CD8-positive, alpha-beta T cell (primary cell): ENCODE measurements at regions of chr7 and their contacts with region 1.

Region 1: GRCh38 chr7:100556541-100556940 is 17.2 kb downstream of the SAP25 start:
- DNase-seq: no peak
- ATAC-seq: no peak
- H3K4me3 ChIP-seq: no peak overlapping the region
- H3K4me3 Mint-ChIP-seq: no peak overlapping the region
- H3K27ac ChIP-seq: no peak overlapping the region
- H3K27ac Mint-ChIP-seq: no peak overlapping the region
- H3K4me1 ChIP-seq: peaks cover 5% of the 10 kb centered on the region
- H3K4me1 Mint-ChIP-seq: peaks cover 13% of the 10 kb centered on the region
- H3K27me3 ChIP-seq: no peaks in the 10 kb centered on the region
- H3K27me3 Mint-ChIP-seq: no peaks in the 10 kb centered on the region
- CTCF ChIP-seq: no peak

Region 2: DNA sequence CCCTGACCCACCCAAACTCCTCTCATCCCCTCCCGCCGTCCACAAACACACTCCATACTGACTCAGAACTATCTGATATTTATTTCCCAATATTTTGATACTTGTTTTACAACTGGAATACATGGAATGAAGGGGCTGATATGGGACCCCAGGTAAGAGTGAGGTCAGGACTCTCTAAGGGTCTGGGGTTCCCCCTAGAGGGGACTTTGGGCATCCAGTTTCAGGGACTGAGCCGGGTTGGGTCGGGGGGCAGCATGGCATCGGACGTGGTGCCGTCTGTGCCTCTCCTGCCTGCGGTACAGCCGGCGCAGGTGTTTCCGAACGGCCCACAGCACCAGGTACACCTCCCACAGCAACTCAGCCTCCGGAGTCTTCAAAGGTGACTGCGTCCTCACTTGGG is 100.0 kb before region 1 on chr7:
- CTCF ChIA-PET with region 1: interaction called, 211 read pairs
- POLR2A ChIA-PET with region 1: no interaction called
- intact Hi-C with region 1: no loop called
- DNase-seq: no peak
- ATAC-seq: no peak
- H3K4me3 ChIP-seq: no peak overlapping the region
- H3K4me3 Mint-ChIP-seq: no peak overlapping the region
- H3K27ac ChIP-seq: no peak overlapping the region
- H3K27ac Mint-ChIP-seq: no peak overlapping the region
- H3K4me1 ChIP-seq: peaks cover 8% of the 10 kb centered on the region
- H3K4me1 Mint-ChIP-seq: peaks cover 9% of the 10 kb centered on the region
- H3K27me3 ChIP-seq: no peaks in the 10 kb centered on the region
- H3K27me3 Mint-ChIP-seq: no peaks in the 10 kb centered on the region
- CTCF ChIP-seq: no peak

Region 3: GRCh38 chr7:100489824-100490223 is 66.7 kb before region 1 on chr7:
- CTCF ChIA-PET with region 1: interaction called, 23 read pairs
- POLR2A ChIA-PET with region 1: interaction called, 3 read pairs
- intact Hi-C with region 1: no loop called
- DNase-seq: peak in 4 of 9 experiments; percentile 24 to 66 (median 49)
- ATAC-seq: no peak
- H3K4me3 ChIP-seq: no peak overlapping the region
- H3K4me3 Mint-ChIP-seq: no peak overlapping the region
- H3K27ac ChIP-seq: no peak overlapping the region
- H3K27ac Mint-ChIP-seq: no peak overlapping the region
- H3K4me1 ChIP-seq: peaks cover 12% of the 10 kb centered on the region
- H3K4me1 Mint-ChIP-seq: peaks cover 15% of the 10 kb centered on the region
- H3K27me3 ChIP-seq: no peaks in the 10 kb centered on the region
- H3K27me3 Mint-ChIP-seq: no peaks in the 10 kb centered on the region
- CTCF ChIP-seq: no peak

Region 4: DNA sequence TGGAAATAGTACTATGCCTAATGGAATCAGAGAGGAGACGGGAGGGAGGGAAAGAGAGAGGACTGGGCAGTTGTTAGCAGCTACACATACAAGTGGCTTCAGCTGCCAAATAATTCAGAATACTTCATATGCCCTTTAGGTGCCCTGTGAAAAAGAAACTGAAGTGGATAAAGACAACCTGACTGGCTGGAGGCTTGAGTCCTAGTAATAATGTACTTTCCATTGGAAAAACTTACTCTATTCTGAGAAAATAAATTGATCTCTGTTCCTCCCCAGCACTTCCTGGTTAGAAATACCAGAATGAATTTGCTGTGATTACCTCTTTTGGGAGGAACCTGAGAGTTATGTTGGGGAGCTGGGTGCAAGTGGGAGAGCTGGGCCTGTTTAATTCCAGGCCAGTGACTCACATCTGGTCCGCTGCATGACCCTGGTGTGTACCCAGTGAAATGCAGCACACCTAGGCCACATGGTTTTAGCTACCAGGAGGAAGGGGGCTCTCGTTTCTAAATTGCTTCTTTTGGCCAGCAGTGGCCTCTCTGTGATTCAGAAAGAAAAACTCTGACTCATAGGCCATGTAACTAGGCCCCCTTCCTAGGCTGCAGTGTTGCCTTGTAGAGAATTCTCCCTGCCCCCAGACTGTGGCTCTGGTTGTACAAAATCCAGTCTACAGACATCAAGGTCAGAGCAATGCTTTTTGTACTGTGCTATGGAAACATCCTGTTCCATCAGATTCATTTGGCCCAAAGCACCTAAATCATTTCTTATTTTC is 11.0 kb before region 1 on chr7:
- CTCF ChIA-PET with region 1: interaction called, 86 read pairs
- POLR2A ChIA-PET with region 1: interaction called, 13 read pairs
- intact Hi-C with region 1: no loop called
- DNase-seq: peak in 6 of 9 experiments; percentile 53 to 65 (median 57)
- ATAC-seq: peak; percentile 75
- H3K4me3 ChIP-seq: peak overlapping the region; percentile 0 to 21
- H3K4me3 Mint-ChIP-seq: peak overlapping the region; percentile 72
- H3K27ac ChIP-seq: peak overlapping the region; percentile 17 to 84
- H3K27ac Mint-ChIP-seq: peak overlapping the region; percentile 91
- H3K4me1 ChIP-seq: peaks cover 91% of the 10 kb centered on the region
- H3K4me1 Mint-ChIP-seq: peaks cover 91% of the 10 kb centered on the region
- H3K27me3 ChIP-seq: no peaks in the 10 kb centered on the region
- H3K27me3 Mint-ChIP-seq: no peaks in the 10 kb centered on the region
- CTCF ChIP-seq: no peak

Region 5: DNA sequence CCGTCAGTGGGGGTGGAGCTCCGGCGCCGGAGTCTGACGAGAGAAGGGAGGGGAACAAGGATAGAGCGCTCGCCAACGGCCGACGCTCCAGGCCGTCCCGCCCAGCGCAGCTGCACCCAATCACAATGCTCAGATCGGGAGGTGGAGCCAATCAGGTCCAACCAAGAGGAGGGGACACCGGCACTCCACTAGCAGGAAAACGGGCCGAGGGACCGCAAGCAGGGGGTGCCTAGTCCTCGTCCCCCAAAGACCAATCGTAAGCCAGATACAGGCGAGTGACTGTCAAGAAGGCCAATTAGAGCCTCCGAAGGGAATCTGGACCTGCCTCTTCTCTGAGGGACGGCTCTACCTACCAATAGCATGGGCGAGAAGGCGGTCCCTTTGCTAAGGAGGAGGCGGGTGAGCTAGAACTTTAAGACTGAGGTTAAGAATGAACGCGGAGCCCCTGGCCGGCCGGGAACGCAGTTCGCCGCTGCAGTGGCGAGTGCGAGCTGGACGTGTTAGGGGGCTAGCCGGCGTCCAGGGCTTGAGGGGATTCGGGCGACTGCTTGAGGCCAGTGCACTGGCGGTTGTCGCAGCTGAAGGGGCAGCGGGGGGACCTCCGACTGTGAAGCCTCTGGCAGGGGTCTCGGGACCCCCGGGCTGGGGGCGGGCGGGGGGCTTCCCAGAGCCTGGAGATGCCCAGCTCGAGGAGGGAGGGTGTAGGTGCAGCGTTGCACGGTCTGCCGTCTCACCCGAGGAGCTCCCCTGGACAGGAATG is 29.9 kb after region 1 on chr7 and contains the start of gene FBXO24:
- CTCF ChIA-PET with region 1: interaction called, 210 read pairs
- POLR2A ChIA-PET with region 1: interaction called, 17 read pairs
- intact Hi-C with region 1: no loop called
- DNase-seq: peak; percentile 98 to 100 (median 99)
- ATAC-seq: peak; percentile 80
- H3K4me3 ChIP-seq: peak within 1 kb of the TSS; percentile 93 to 96
- H3K4me3 Mint-ChIP-seq: peak within 1 kb of the TSS; percentile 96
- H3K27ac ChIP-seq: peak within 1 kb of the TSS; percentile 74 to 94
- H3K27ac Mint-ChIP-seq: peak within 1 kb of the TSS; percentile 57
- H3K4me1 ChIP-seq: peaks cover 22% of the 10 kb centered on the region
- H3K4me1 Mint-ChIP-seq: peaks cover 39% of the 10 kb centered on the region
- H3K27me3 ChIP-seq: no peaks in the 10 kb centered on the region
- H3K27me3 Mint-ChIP-seq: peaks cover 3% of the 10 kb centered on the region
- CTCF ChIP-seq: no peak
- total RNA-seq, gene FBXO24: 0.30 to 0.53 TPM